ENCODE measurements at regions of chr10 and their contacts with region 1.

Region 1: DNA sequence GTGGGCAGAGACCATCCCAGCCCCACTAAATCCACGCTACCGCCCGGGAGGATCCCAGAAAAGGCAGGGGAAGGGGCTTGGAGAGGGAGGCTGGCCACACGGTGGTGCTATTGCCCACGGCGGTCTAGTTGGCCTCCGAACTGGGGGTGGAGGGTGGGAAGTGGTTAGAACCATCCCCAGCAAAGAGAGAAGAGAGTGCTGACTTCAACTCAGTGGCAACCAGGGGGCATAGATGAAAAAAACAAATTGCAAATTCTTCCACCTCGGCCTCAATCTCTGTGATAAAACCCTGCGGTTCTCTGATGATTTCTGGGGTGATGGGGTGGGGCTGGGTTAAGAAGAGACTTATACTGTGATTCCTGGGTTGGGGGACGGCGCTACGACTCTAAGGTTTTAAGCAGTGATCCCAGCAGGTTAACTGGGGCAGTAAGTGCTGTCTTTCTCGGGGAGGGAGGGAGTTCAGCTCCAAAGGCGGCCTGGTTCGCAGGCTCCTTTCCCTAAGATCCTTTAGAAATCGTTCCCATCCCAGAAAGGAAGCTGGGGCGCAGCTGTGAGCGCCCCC is 154.5 kb upstream of the LYZL2 start:
- DNase-seq: peak; percentile 65 to 89 (median 84)
- ATAC-seq: peak; percentile 96
- H3K4me3 ChIP-seq: peak overlapping the region; percentile 64
- H3K4me3 Mint-ChIP-seq: peak overlapping the region; percentile 80 to 92 (median 88)
- H3K27ac ChIP-seq: peak overlapping the region; percentile 64
- H3K27ac Mint-ChIP-seq: peak overlapping the region; percentile 69 to 96 (median 81)
- H3K4me1 ChIP-seq: peaks cover 0 to 16% of the 10 kb centered on the region in 2 donors
- H3K4me1 Mint-ChIP-seq: peaks cover 5 to 30% (median 25%) of the 10 kb centered on the region in 7 donors
- H3K27me3 ChIP-seq: no peaks in the 10 kb centered on the region
- H3K27me3 Mint-ChIP-seq: peaks cover 0 to 2% (median 0%) of the 10 kb centered on the region in 5 donors

Region 2: GRCh38 chr10:30671026-30671616 is 112.9 kb before region 1 on chr10:
- CTCF ChIA-PET with region 1: no interaction called
- POLR2A ChIA-PET with region 1: no interaction called
- intact Hi-C with region 1: loop called in 1 of 2 experiments (anchors 5 kb)
- DNase-seq: peak in 6 of 9 donors; percentile 15 to 51 (median 40)
- ATAC-seq: peak; percentile 76
- H3K4me3 ChIP-seq: peak overlapping the region; percentile 40
- H3K4me3 Mint-ChIP-seq: peak overlapping the region in 9 of 10 donors; percentile 43 to 80 (median 74)
- H3K27ac ChIP-seq: no peak overlapping the region
- H3K27ac Mint-ChIP-seq: no peak overlapping the region
- H3K4me1 ChIP-seq: no peaks in the 10 kb centered on the region
- H3K4me1 Mint-ChIP-seq: peaks cover 0 to 13% (median 0%) of the 10 kb centered on the region in 7 donors
- H3K27me3 ChIP-seq: no peaks in the 10 kb centered on the region
- H3K27me3 Mint-ChIP-seq: peaks cover 0 to 23% (median 12%) of the 10 kb centered on the region in 5 donors

Region 3: DNA sequence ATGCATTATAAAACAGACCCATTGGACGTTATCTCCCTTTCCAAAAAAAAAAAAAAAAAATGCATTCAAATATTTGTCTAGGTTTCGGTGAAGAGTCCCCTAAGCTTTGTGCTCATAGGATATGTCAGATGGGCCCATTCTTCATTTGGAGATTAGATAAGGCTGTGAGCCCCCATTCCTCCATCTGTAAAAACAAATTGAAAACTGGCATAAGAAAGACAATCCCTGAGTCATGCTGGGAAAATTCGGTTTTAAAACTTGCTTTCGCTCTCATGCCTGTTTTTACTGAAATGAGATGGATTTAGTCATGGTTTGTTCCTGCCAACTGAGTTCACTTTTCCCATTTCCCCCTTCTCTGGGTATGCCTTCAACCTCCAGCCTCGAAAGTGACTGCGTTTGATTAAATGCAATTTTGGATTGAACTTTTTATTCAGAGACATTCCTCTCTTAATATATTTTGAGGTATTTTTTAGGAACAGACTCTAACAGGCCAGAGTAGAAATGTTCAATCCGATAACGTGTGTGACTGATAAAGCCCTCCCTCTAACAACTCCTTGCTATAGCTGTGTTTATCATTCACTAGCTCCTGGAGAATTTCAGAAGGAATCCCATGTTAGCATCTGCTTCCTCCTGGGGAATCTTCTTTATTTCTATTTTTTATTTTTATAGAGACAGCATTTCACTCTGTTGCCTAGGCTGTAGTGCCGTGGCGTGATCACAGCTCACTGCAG is 36.4 kb after region 1 on chr10:
- CTCF ChIA-PET with region 1: interaction called, 24 read pairs
- POLR2A ChIA-PET with region 1: interaction called, 11 read pairs
- intact Hi-C with region 1: loop called in 1 of 2 experiments (anchors 1 kb)
- DNase-seq: no peak
- ATAC-seq: no peak
- H3K4me3 ChIP-seq: no peak overlapping the region
- H3K4me3 Mint-ChIP-seq: no peak overlapping the region
- H3K27ac ChIP-seq: no peak overlapping the region
- H3K27ac Mint-ChIP-seq: peak overlapping the region in 1 of 9 donors; percentile 46
- H3K4me1 ChIP-seq: no peaks in the 10 kb centered on the region
- H3K4me1 Mint-ChIP-seq: peaks cover 0 to 20% (median 15%) of the 10 kb centered on the region in 7 donors
- H3K27me3 ChIP-seq: no peaks in the 10 kb centered on the region
- H3K27me3 Mint-ChIP-seq: peaks cover 0 to under 1% (median 0%) of the 10 kb centered on the region in 5 donors

Region 4: GRCh38 chr10:30999070-30999712 is 215.2 kb after region 1 on chr10:
- CTCF ChIA-PET with region 1: no interaction called
- POLR2A ChIA-PET with region 1: no interaction called
- intact Hi-C with region 1: loop called in 1 of 2 experiments (anchors 10 kb)
- DNase-seq: no peak
- ATAC-seq: peak; percentile 86
- H3K4me3 ChIP-seq: peak overlapping the region; percentile 30
- H3K4me3 Mint-ChIP-seq: peak overlapping the region; percentile 4 to 79 (median 72)
- H3K27ac ChIP-seq: no peak overlapping the region
- H3K27ac Mint-ChIP-seq: peak overlapping the region in 8 of 9 donors; percentile 9 to 90 (median 62)
- H3K4me1 ChIP-seq: peaks cover 6 to 7% of the 10 kb centered on the region in 2 donors
- H3K4me1 Mint-ChIP-seq: peaks cover 22 to 43% (median 38%) of the 10 kb centered on the region in 7 donors
- H3K27me3 ChIP-seq: no peaks in the 10 kb centered on the region
- H3K27me3 Mint-ChIP-seq: no peaks in the 10 kb centered on the region

Region 5: GRCh38 chr10:31143331-31143935 is 359.4 kb after region 1 on chr10:
- CTCF ChIA-PET with region 1: no interaction called
- POLR2A ChIA-PET with region 1: no interaction called
- intact Hi-C with region 1: no loop called
- DNase-seq: no peak
- ATAC-seq: no peak
- H3K4me3 ChIP-seq: no peak overlapping the region
- H3K4me3 Mint-ChIP-seq: no peak overlapping the region
- H3K27ac ChIP-seq: no peak overlapping the region
- H3K27ac Mint-ChIP-seq: peak overlapping the region in 3 of 9 donors; percentile 18 to 51 (median 48)
- H3K4me1 ChIP-seq: peaks cover 0 to 13% of the 10 kb centered on the region in 2 donors
- H3K4me1 Mint-ChIP-seq: peaks cover 5 to 25% (median 18%) of the 10 kb centered on the region in 7 donors
- H3K27me3 ChIP-seq: no peaks in the 10 kb centered on the region
- H3K27me3 Mint-ChIP-seq: peaks cover 0 to 6% (median 0%) of the 10 kb centered on the region in 5 donors

Region 6: DNA sequence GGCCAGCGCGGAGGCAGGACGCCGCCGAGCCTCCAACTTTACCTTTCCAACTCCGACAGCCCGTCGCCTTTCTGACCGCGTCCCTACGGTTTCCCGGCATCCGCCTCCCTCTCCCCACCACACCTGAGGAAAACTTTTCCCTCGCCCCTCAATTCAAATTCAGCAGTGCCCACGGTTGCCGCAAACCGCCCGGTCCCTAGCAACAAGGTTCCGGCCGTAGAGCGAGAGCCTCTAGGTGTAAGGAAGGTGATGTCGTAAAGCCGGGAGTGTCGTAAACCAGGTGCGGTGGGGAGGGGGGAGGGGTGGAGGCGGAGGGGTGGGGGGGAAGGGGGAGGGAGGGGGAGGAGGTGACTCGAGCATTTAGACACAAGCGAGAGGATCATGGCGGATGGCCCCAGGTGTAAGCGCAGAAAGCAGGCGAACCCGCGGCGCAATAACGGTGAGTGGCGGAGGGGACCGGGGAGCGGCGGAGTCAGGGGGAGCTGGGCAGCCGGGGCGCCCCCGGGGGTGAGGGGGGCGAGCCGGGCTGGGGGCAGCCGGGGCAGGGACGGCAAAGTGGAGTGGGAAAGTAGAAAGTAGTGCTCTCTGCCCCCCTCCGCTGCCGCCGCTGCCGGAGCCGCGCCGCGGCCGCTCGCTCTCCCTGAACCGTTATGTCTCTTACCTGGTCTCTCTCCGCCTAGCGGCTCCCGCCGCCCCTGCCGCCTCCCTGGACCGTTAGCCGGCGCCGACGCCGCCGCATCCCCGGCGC is 535.0 kb after region 1 on chr10 and contains the start of gene ZEB1:
- CTCF ChIA-PET with region 1: interaction called, 3 read pairs
- POLR2A ChIA-PET with region 1: interaction called, 4 read pairs
- intact Hi-C with region 1: loop called (anchors 1 kb)
- DNase-seq: peak; percentile 64 to 96 (median 91)
- ATAC-seq: peak; percentile 79
- H3K4me3 ChIP-seq: peak within 1 kb of the TSS; percentile 89
- H3K4me3 Mint-ChIP-seq: peak within 1 kb of the TSS; percentile 91 to 100 (median 99)
- H3K27ac ChIP-seq: peak within 1 kb of the TSS; percentile 99
- H3K27ac Mint-ChIP-seq: peak within 1 kb of the TSS; percentile 96 to 100 (median 99)
- H3K4me1 ChIP-seq: peaks cover 11 to 27% of the 10 kb centered on the region in 2 donors
- H3K4me1 Mint-ChIP-seq: peaks cover 14 to 48% (median 41%) of the 10 kb centered on the region in 7 donors
- H3K27me3 ChIP-seq: no peaks in the 10 kb centered on the region
- H3K27me3 Mint-ChIP-seq: peaks cover 0 to 2% (median 0%) of the 10 kb centered on the region in 5 donors
- total RNA-seq, gene ZEB1: 65.5 to 126 (median 80.9) TPM

Region 7: DNA sequence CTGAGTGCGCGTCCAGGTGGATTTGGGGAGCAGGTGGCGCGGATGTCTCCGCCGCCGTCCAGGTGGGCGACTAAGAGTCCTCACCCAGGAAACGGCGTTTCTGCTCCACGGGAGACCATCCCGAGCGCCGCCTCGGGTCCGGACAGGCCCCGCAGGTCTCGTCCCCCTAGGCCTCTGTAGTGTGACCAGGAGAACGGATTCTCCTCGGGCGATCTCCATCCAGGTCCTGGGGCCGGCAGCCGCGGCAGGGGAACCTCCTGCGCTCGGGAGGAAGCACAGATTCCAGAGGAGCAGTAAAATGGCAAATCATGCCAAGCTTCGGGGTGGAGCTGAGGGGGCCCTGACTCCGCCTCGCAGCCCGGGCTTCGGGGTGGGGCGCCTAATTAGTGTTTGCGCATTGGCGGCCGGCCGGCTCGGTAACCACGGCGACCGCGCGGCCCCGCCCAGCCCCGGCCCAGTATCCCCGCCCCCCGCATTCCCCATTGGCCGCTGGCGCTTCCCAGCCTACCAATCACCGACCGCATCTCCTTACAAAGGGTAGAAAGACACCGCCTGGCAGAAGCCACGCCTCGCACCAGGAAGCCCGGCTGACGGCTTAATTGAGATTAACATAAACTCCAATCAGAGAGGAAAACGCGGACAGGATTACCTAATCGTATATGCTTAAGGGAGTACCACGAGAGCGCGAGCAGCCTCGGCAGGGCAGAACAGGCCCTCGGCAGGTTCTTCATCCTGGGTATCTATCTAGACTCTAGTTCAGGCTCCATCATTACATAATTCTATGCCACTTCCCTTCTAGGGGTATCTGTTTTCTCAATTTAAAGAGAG is 976.0 kb after region 1 on chr10:
- CTCF ChIA-PET with region 1: interaction called, 3 read pairs
- POLR2A ChIA-PET with region 1: interaction called, 4 read pairs
- intact Hi-C with region 1: loop called in 1 of 2 experiments (anchors 1 kb)
- DNase-seq: peak; percentile 85 to 98 (median 94)
- ATAC-seq: peak; percentile 97
- H3K4me3 ChIP-seq: peak overlapping the region; percentile 95
- H3K4me3 Mint-ChIP-seq: peak overlapping the region; percentile 81 to 96 (median 91)
- H3K27ac ChIP-seq: peak overlapping the region; percentile 87
- H3K27ac Mint-ChIP-seq: peak overlapping the region; percentile 90 to 100 (median 98)
- H3K4me1 ChIP-seq: peaks cover 6 to 7% of the 10 kb centered on the region in 2 donors
- H3K4me1 Mint-ChIP-seq: peaks cover 8 to 24% (median 16%) of the 10 kb centered on the region in 7 donors
- H3K27me3 ChIP-seq: no peaks in the 10 kb centered on the region
- H3K27me3 Mint-ChIP-seq: no peaks in the 10 kb centered on the region

Region 8: DNA sequence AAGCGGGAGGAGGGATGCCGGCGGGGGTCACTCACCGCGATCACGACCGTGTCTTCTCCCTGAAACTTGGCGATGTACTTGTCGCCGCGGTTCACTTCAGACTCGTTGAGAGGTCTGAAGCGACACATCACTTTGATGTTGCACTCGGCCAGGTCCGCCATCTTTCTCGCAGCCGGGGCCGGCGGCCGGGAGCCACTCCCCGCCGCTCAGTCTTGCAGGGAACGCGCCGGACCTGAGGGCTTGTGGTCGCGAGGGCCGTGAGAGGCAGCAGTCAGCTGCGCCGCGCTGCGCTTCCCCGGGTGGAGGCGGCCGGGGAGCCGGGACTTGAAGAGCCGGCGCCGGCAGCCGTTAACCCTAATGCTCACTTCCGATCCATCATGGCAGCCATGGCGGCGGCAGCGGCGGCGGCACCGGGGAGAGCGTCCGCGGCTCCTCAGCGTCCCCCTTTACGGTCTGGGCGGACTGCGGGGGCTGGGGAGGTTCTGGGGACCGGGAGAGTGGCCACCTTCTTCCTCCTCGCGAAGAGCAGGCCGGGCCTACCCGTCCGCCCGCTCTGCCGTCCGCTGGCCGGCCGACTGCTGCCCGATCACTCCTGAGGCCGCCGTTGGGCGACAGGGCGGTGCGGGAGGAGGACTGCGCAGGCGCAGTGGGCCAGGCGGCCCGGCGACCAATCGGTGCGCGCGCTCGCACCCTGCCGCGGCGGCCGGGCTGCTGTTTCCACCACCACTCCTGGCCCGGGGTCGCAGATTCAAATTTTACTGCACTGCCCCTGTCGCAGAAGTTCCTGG is 1272.0 kb after region 1 on chr10 and contains the start of gene KIF5B:
- CTCF ChIA-PET with region 1: no interaction called
- POLR2A ChIA-PET with region 1: no interaction called
- intact Hi-C with region 1: loop called in 1 of 2 experiments (anchors 5 kb)
- DNase-seq: peak; percentile 77 to 95 (median 90)
- ATAC-seq: peak; percentile 87
- H3K4me3 ChIP-seq: peak within 1 kb of the TSS; percentile 71
- H3K4me3 Mint-ChIP-seq: peak within 1 kb of the TSS; percentile 94 to 99 (median 96)
- H3K27ac ChIP-seq: peak within 1 kb of the TSS; percentile 83
- H3K27ac Mint-ChIP-seq: peak within 1 kb of the TSS; percentile 90 to 97 (median 93)
- H3K4me1 ChIP-seq: peaks cover 30 to 34% of the 10 kb centered on the region in 2 donors
- H3K4me1 Mint-ChIP-seq: peaks cover 33 to 55% (median 47%) of the 10 kb centered on the region in 7 donors
- H3K27me3 ChIP-seq: no peaks in the 10 kb centered on the region
- H3K27me3 Mint-ChIP-seq: no peaks in the 10 kb centered on the region
- total RNA-seq, gene KIF5B: 42.2 to 66.0 (median 46.3) TPM

Measured in naive thymus-derived CD4-positive, alpha-beta T cell (primary cell).